Activated CD4-positive, alpha-beta memory T cell treated with anti-CD3 and anti-CD28 coated beads, Interleukin-2, amount 10 ng/mL, durations not matched to agents 7 days and 5 days (primary cell): ENCODE measurements at regions of chr20 and their contacts with region 1.

Region 1: DNA sequence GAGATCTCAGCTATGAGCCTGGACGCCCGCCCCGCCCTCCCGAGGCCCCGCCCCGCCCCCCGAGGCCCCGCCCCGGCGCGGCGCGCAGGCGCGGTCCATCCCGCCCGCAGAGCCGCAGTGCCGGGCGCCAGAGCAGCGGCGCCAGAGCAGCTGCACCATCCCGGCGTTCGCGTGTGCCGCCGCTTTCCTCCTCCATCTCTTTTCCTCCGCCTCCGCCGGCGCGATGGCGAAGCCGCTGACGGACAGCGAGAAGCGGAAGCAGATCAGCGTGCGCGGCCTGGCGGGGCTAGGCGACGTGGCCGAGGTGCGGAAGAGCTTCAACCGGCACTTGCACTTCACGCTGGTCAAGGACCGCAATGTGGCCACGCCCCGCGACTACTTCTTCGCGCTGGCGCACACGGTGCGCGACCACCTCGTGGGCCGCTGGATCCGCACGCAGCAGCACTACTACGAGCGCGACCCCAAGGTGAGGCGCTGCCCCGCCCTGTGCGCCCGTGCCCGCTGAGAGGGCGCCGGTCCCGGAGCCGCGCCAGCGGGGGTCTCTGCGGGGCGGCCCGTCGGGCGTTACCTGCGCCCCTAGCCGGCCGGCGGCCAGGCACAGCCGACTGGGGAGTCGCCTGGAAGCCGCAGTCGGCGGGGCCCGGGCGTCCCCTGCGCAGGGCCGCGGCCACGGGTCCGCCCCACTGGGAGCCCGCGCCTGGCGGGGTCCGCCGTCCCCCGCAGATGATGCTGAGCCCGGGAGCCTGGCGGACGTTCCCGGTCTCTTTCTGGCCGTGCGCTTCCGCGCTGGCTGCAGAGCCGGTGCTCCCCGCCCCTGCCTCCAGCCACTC is at the start of gene PYGB:
- DNase-seq: peak; percentile 77
- H3K4me3 Mint-ChIP-seq: peak within 1 kb of the TSS; percentile 90
- H3K27ac Mint-ChIP-seq: peak within 1 kb of the TSS; percentile 82
- H3K4me1 Mint-ChIP-seq: peaks cover 41% of the 10 kb centered on the region
- H3K27me3 Mint-ChIP-seq: peaks cover 12% of the 10 kb centered on the region
- total RNA-seq, gene PYGB: 28.4 to 29.8 TPM

Region 2: DNA sequence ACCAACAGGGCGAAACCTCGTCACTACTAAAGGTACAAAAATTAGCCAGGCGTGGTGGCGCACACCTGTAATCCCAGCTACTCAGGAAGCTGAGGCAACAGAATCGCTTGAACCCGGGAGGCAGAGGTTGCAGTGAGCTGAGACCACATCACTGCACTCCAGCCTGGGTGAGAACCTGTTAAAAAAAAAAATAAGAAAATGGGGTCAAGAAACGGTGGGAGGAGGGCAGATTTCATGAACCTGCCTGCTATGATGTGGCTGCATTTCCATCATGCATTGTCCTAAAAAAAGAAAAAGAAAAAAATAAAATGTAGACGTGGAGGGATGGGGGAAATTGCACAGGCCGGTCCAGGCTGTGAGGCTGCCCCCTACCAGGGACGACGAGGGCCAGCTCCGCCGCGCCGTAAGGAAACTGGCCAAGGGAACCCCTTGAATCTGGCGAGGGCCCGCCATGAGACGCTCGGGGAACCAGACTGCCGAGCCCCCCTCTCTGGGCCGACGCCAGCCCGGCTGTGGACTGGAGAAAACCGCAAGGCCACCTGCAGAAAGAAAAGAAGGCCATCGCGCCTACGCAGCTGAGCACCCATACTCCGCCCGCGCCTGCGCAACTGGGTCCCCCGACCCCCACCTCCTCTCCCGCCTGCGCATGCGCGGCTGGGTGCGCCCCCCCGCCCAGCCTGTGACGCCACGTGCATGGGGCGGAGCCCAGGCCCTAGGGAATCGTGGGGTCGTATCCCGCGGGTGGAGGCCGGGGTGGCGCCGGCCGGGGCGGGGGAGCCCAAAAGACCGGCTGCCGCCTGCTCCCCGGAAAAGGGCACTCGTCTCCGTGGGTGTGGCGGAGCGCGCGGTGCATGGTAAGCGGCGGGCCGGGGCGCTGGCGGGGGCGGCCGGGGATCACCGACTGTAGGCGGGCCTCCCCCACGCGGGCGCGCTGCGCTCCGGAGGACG is 52.9 kb before region 1 on chr20 and contains the start of gene ENTPD6:
- CTCF ChIA-PET with region 1: interaction called, 3 read pairs
- POLR2A ChIA-PET with region 1: interaction called, 22 read pairs
- DNase-seq: peak; percentile 89
- H3K4me3 Mint-ChIP-seq: peak within 1 kb of the TSS; percentile 88
- H3K27ac Mint-ChIP-seq: peak within 1 kb of the TSS; percentile 59
- H3K4me1 Mint-ChIP-seq: peaks cover 33% of the 10 kb centered on the region
- H3K27me3 Mint-ChIP-seq: no peaks in the 10 kb centered on the region
- total RNA-seq, gene ENTPD6: 47.7 to 48.2 TPM

Region 3: GRCh38 chr20:25223179-25223661 is 25.0 kb before region 1 on chr20:
- CTCF ChIA-PET with region 1: interaction called, 8 read pairs
- POLR2A ChIA-PET with region 1: interaction called, 13 read pairs
- DNase-seq: peak; percentile 65
- H3K4me3 Mint-ChIP-seq: no peak overlapping the region
- H3K27ac Mint-ChIP-seq: peak overlapping the region; percentile 58
- H3K4me1 Mint-ChIP-seq: peaks cover 9% of the 10 kb centered on the region
- H3K27me3 Mint-ChIP-seq: no peaks in the 10 kb centered on the region

Region 4: GRCh38 chr20:25237610-25238318 is 10.4 kb before region 1 on chr20:
- CTCF ChIA-PET with region 1: no interaction called
- POLR2A ChIA-PET with region 1: interaction called, 12 read pairs
- DNase-seq: peak; percentile 72
- H3K4me3 Mint-ChIP-seq: peak overlapping the region; percentile 48
- H3K27ac Mint-ChIP-seq: peak overlapping the region; percentile 86
- H3K4me1 Mint-ChIP-seq: peaks cover 20% of the 10 kb centered on the region
- H3K27me3 Mint-ChIP-seq: peaks cover 18% of the 10 kb centered on the region

Region 5: DNA sequence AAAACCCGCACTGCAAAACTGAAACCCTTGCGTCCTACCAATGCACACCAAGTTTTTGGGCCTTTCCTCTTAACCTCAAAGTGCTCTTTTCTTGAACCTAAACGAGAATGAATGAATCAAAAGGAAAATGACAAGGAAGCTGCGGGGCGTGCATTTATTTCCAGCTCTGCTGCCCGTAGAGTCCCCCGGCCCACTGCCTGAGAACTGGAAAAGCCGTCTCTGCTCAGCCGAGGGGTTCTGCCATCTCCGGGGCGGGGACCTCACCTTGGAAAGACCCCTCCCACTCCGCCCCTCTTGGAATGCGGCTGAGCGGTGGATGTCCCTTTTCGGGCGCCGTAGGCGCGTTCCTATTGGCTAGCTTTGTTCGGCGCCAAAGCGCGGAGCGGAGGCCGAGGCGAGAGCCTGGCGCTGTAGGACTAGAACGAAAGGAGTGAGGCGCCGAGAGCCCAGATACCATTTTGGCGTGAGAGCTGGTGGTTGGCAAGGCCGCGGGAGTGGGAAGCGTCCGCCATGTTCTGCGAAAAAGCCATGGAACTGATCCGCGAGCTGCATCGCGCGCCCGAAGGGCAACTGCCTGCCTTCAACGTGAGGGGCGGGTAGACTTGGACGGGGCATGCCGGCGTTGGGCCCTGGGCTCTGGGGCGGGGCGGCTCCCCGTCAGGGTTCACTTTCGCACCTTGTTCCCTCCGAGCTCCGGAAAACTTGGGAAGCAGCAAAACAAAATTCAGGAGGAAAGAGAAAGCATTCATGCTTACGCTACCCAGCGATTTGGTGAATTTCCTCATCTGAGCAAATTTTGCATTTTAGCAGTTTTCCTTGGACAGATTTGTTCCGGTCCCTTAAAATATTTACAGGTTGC is 159.4 kb after region 1 on chr20 and contains the start of gene GINS1:
- CTCF ChIA-PET with region 1: no interaction called
- POLR2A ChIA-PET with region 1: interaction called, 11 read pairs
- DNase-seq: peak; percentile 86
- H3K4me3 Mint-ChIP-seq: peak within 1 kb of the TSS; percentile 90
- H3K27ac Mint-ChIP-seq: peak within 1 kb of the TSS; percentile 79
- H3K4me1 Mint-ChIP-seq: peaks cover 34% of the 10 kb centered on the region
- H3K27me3 Mint-ChIP-seq: no peaks in the 10 kb centered on the region
- total RNA-seq, gene GINS1: 27.5 to 28.0 TPM